ENCODE measurements at regions of chr2 and their contacts with region 1.

Region 1: DNA sequence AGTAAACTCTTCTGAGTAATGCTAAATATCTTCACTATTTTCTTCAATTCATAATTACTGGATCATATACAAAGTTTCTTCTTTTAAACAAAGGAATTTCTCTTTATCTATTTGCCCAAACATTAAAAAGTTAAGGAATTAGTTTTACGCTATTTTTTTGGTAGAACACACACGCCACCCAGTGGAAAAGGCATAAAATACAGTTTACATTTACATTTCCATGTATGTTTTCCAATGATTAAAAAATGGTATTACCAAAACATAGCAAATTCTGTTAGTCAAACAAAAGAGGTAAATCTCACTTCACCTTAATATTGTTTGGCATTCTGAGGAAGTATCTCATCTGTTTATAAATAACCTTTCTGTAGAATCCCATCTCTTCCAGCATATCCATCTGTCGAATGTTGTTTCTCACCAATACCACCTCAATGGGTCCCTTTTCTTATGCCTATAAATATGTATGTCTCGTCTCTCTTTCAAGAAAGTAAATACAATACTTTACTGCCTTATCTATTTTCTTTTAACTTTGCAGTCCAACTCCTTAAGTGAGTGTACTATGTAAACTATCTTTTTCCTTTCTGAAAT is 7.2 kb downstream of the BOLL start:
- DNase-seq: peak in 5 of 9 donors; percentile 30 to 50 (median 37)
- ATAC-seq: no peak
- H3K4me3 ChIP-seq: no peak overlapping the region
- H3K4me3 Mint-ChIP-seq: no peak overlapping the region
- H3K27ac ChIP-seq: no peak overlapping the region
- H3K27ac Mint-ChIP-seq: no peak overlapping the region
- H3K4me1 ChIP-seq: no peaks in the 10 kb centered on the region
- H3K4me1 Mint-ChIP-seq: peaks cover 0 to 6% (median 0%) of the 10 kb centered on the region in 7 donors
- H3K27me3 ChIP-seq: no peaks in the 10 kb centered on the region
- H3K27me3 Mint-ChIP-seq: peaks cover 4 to 26% (median 9%) of the 10 kb centered on the region in 5 donors

Region 2: GRCh38 chr2:196750982-196751635 is 1026.8 kb before region 1 on chr2:
- CTCF ChIA-PET with region 1: no interaction called
- POLR2A ChIA-PET with region 1: no interaction called
- intact Hi-C with region 1: loop called in 1 of 2 experiments (anchors 1 kb)
- DNase-seq: peak; percentile 17 to 62 (median 51)
- ATAC-seq: peak; percentile 95
- H3K4me3 ChIP-seq: no peak overlapping the region
- H3K4me3 Mint-ChIP-seq: peak overlapping the region in 2 of 10 donors; percentile 7 to 33
- H3K27ac ChIP-seq: no peak overlapping the region
- H3K27ac Mint-ChIP-seq: peak overlapping the region in 4 of 9 donors; percentile 21 to 33 (median 28)
- H3K4me1 ChIP-seq: no peaks in the 10 kb centered on the region
- H3K4me1 Mint-ChIP-seq: peaks cover 9 to 24% (median 16%) of the 10 kb centered on the region in 7 donors
- H3K27me3 ChIP-seq: no peaks in the 10 kb centered on the region
- H3K27me3 Mint-ChIP-seq: no peaks in the 10 kb centered on the region

Region 3: DNA sequence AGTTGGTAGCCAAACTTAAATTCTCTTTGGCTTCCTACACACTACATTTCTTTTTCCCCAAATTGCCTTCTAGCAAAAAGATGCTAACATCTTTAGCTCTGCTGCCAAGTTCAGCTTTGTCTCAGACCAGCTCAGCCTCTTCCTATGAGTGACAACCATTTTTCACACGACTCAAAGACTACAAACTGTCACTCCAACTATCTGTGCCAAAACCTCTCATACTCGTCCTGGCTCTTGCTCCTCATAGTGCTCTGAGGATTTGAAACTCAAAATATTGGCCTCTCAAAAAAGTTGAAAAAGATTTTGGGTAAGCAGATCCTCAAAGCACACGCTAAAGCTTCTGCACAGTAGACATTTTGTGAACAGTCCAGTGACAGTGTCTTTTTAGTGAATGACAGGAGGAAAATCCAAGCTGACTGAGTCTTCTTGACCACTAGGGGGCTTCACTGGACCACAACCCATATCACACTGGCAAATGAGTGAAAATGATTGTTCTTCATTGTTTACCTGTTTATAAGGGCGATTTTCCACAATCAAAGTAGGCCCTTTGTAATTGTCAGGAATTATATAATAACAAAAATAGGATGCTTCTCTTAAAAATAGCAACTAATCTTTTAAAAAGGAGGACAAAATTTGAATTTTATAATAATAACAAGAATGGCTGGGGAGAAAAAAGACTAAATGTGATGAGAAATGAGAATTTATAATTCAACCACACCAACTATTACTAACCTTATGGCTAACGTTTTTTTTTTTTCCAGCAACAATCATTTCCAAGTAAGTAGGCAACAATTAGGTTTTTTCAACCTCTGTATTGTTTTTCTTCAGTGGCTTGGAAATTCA is 765.9 kb before region 1 on chr2:
- CTCF ChIA-PET with region 1: no interaction called
- POLR2A ChIA-PET with region 1: no interaction called
- intact Hi-C with region 1: loop called in 1 of 2 experiments (anchors 2 kb)
- DNase-seq: peak in 6 of 9 donors; percentile 11 to 51 (median 40)
- ATAC-seq: peak; percentile 76
- H3K4me3 ChIP-seq: no peak overlapping the region
- H3K4me3 Mint-ChIP-seq: no peak overlapping the region
- H3K27ac ChIP-seq: no peak overlapping the region
- H3K27ac Mint-ChIP-seq: peak overlapping the region; percentile 5 to 90 (median 73)
- H3K4me1 ChIP-seq: peaks cover 0 to 3% of the 10 kb centered on the region in 2 donors
- H3K4me1 Mint-ChIP-seq: peaks cover 0 to 18% (median 9%) of the 10 kb centered on the region in 7 donors
- H3K27me3 ChIP-seq: no peaks in the 10 kb centered on the region
- H3K27me3 Mint-ChIP-seq: no peaks in the 10 kb centered on the region

Region 4: DNA sequence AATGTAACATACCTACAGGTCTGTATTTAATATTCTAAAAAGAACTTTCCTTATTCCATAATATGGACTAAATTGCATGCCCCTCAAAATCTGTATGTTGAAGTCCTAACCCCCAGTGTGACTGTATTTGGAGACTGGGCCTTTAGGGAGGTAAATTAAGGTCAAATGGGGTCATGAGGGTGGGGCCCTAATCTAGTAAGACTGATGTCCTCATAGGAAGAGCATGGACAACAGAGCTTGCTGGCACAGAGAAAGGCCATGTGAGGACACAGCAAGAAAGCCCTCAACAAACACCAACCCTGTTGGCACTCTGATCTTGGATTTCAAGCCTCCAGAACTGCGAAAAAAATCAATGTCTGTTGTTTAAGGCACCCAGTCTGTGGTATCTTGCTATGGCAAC is 361.6 kb before region 1 on chr2:
- CTCF ChIA-PET with region 1: no interaction called
- POLR2A ChIA-PET with region 1: no interaction called
- intact Hi-C with region 1: loop called in 1 of 2 experiments (anchors 5 kb)
- DNase-seq: no peak
- ATAC-seq: no peak
- H3K4me3 ChIP-seq: no peak overlapping the region
- H3K4me3 Mint-ChIP-seq: no peak overlapping the region
- H3K27ac ChIP-seq: no peak overlapping the region
- H3K27ac Mint-ChIP-seq: peak overlapping the region in 2 of 9 donors; percentile 17 to 59
- H3K4me1 ChIP-seq: peaks cover 0 to 4% of the 10 kb centered on the region in 2 donors
- H3K4me1 Mint-ChIP-seq: peaks cover 9 to 26% (median 15%) of the 10 kb centered on the region in 7 donors
- H3K27me3 ChIP-seq: no peaks in the 10 kb centered on the region
- H3K27me3 Mint-ChIP-seq: no peaks in the 10 kb centered on the region

Region 5: GRCh38 chr2:198362740-198363139 is 584.8 kb after region 1 on chr2:
- CTCF ChIA-PET with region 1: no interaction called
- POLR2A ChIA-PET with region 1: no interaction called
- intact Hi-C with region 1: no loop called
- DNase-seq: no peak
- ATAC-seq: no peak
- H3K4me3 ChIP-seq: no peak overlapping the region
- H3K4me3 Mint-ChIP-seq: no peak overlapping the region
- H3K27ac ChIP-seq: no peak overlapping the region
- H3K27ac Mint-ChIP-seq: no peak overlapping the region
- H3K4me1 ChIP-seq: no peaks in the 10 kb centered on the region
- H3K4me1 Mint-ChIP-seq: no peaks in the 10 kb centered on the region
- H3K27me3 ChIP-seq: no peaks in the 10 kb centered on the region
- H3K27me3 Mint-ChIP-seq: peaks cover 17 to 38% (median 24%) of the 10 kb centered on the region in 5 donors

Measured in naive thymus-derived CD4-positive, alpha-beta T cell (primary cell).